Head of caudate nucleus (tissue), 42 donors: ENCODE measurements at regions of chr12 and their contacts with region 1.

Region 1: DNA sequence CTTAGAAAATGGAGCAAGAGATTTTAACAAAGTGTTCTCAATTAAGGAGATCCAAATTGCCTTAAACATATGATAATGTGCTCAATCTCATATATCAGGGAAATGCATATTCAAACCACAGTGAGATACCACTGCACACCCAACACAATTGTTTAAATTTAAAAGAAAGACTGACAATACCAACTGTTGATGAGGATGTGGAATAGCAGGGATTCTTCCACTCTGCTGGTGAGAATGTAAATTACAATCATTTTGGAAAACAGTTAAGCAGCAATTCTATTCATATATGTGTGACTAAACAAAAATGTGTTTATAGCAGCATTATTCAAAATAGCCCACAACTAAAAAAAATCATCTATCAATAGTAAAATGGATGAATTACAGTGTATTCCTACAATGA is 144.2 kb downstream of the KICS2 start:
- DNase-seq: no peak

Region 2: GRCh38 chr12:63989301-63989845 is 88.5 kb before region 1 on chr12:
- intact Hi-C with region 1: loop called (anchors 10 kb)
- DNase-seq: peak in 1 of 42 donors; percentile 28

Region 3: DNA sequence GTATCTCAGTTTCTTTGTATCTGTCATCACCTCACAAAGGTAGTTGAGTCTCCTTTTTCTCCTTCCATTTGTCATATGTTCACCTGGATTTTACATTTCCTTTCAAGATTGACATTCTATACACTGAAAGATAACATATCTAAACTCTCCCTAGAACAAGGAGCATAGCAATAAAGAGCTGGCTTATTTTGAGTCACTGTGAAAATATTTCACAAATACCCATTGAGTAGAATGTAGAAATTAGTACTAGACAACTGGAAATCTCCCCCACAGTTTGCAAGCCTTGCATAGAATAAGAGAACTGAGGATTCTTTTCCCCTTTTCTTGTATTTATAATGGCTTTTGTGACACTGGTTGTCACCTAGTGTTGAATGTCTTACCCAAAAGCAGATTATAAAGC is 32.9 kb after region 1 on chr12:
- intact Hi-C with region 1: no loop called
- DNase-seq: no peak